ENCODE measurements at regions of chr1 and their contacts with region 1.

Region 1: DNA sequence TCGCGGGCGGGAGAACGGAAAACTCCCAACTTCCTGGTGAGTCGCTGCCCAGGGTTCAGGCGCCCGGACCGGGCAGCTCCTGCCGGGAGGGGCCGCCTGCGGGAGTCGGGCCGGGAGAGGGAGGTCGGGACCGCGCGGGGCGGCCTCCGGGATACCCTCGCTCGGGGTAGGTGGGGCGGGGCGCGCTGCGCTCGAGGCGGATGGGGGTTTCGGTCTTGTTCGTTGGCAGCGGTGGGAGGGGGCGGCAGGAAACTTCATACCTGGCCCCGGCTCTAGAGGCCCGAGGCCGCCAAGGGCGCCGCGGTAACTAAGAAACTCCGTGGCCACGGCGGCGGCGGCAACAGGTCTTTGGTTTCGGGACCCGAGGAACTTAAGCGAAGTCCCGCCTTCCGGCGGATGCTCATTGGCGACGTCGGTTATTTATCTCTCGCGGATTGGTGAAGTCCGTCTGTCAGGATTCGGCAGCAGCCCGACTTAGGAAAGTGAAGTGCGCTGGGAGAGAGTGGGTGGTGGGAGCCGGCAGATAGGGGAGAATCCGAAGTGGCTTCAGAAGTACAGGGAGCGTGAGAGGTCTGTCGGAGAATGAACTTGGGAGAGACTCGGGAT is 546 bp downstream of the NEK7 start:
- DNase-seq: peak; percentile 87
- ATAC-seq: peak; percentile 57
- H3K4me3 Mint-ChIP-seq: peak overlapping the region; percentile 99
- H3K27ac Mint-ChIP-seq: peak overlapping the region; percentile 99
- H3K4me1 Mint-ChIP-seq: peaks cover 37% of the 10 kb centered on the region
- H3K27me3 Mint-ChIP-seq: no peaks in the 10 kb centered on the region

Region 2: DNA sequence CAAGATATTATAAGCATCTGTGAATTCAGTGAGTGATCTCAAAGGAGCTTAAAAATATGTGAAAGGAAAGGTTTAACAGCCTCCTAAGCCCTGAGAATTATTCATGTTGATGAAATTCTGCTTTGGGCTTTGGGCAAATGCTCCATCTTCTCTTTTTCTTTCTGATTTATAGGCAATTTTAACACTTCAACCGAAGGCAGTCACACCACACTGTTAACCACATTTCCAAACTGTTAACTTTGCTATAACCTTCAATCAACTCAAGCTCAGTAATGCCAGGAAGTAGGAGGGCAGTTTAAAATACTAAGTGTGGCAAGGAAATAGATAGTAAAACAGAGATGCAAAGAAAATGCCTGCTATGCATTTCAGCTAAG is 54.9 kb before region 1 on chr1:
- CTCF ChIA-PET with region 1: interaction called, 27 read pairs
- POLR2A ChIA-PET with region 1: interaction called, 9 read pairs
- DNase-seq: peak; percentile 51
- ATAC-seq: peak; percentile 86
- H3K4me3 Mint-ChIP-seq: peak overlapping the region; percentile 39
- H3K27ac Mint-ChIP-seq: peak overlapping the region; percentile 82
- H3K4me1 Mint-ChIP-seq: peaks cover 26% of the 10 kb centered on the region
- H3K27me3 Mint-ChIP-seq: no peaks in the 10 kb centered on the region

Region 3: DNA sequence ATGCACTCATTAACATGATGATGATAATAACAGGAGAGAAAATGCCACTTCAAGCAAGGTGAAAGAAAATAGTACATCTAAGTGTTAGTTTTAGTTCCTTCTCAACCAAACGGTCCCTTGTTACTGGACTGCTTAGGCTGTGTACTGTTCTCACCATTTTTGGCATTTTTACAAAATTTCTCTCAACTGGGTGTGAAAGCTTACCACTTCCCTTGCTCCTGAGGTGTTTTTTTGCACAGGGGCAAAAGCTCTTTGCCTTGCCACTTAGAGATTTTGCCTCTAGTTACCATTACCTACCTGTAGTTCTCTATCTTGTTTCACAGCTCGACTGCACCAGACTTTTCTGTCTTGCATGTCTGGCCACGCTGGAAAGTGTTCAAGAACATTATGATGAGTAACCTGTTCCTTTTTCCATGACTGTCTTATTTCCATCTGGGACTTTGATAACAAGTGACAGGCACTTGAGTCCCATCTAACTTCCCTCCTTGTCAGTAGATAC is 10.1 kb after region 1 on chr1:
- CTCF ChIA-PET with region 1: interaction called, 11 read pairs
- POLR2A ChIA-PET with region 1: interaction called, 11 read pairs
- DNase-seq: peak; percentile 49
- ATAC-seq: peak; percentile 43
- H3K4me3 Mint-ChIP-seq: peak overlapping the region; percentile 75
- H3K27ac Mint-ChIP-seq: peak overlapping the region; percentile 92
- H3K4me1 Mint-ChIP-seq: peaks cover 86% of the 10 kb centered on the region
- H3K27me3 Mint-ChIP-seq: no peaks in the 10 kb centered on the region

Region 4: DNA sequence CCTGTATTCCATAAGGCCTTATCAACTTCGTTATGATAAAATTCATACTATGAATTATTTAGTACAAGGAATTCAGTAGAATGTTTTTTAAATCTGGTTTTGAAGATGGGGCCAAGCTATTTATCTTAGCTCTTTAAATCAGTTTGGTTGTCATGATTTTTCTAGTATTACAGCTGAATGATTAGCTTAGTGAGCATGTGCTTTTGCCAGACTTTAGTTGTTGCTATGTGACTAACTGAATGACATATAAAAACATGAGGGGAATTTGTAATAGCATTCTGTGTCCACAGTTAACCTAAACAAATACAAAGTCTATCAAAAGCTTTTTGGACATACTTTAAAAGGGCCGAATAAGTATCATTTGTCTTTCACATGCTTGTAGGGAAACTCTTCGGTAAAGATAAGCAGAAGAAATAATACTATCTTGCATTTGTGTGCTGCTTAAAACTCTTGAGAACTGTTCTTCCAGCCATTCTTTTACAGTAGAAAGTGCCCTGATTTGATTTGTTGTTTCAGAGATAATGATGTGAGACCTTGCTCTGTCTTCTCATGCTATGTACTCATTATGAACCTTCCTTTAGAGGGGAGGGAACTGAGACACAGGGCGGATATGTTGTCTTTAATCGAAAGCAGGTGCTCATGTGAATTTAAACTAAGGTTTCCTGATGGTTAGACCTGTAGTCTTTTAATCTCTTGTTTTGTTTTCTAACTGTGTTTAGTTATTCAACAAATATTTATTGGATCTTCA is 18.3 kb after region 1 on chr1:
- CTCF ChIA-PET with region 1: interaction called, 11 read pairs
- POLR2A ChIA-PET with region 1: interaction called, 12 read pairs
- DNase-seq: no peak
- ATAC-seq: peak; percentile 65
- H3K4me3 Mint-ChIP-seq: peak overlapping the region; percentile 33
- H3K27ac Mint-ChIP-seq: peak overlapping the region; percentile 64
- H3K4me1 Mint-ChIP-seq: peaks cover 87% of the 10 kb centered on the region
- H3K27me3 Mint-ChIP-seq: no peaks in the 10 kb centered on the region

Region 5: GRCh38 chr1:198234520-198235251 is 77.3 kb after region 1 on chr1:
- CTCF ChIA-PET with region 1: no interaction called
- POLR2A ChIA-PET with region 1: no interaction called
- DNase-seq: no peak
- ATAC-seq: no peak
- H3K4me3 Mint-ChIP-seq: peak overlapping the region; percentile 13
- H3K27ac Mint-ChIP-seq: no peak overlapping the region
- H3K4me1 Mint-ChIP-seq: peaks cover 13% of the 10 kb centered on the region
- H3K27me3 Mint-ChIP-seq: no peaks in the 10 kb centered on the region